GM12878 (cell line): ENCODE measurements at regions of chr7 and their contacts with region 1.

Region 1: DNA sequence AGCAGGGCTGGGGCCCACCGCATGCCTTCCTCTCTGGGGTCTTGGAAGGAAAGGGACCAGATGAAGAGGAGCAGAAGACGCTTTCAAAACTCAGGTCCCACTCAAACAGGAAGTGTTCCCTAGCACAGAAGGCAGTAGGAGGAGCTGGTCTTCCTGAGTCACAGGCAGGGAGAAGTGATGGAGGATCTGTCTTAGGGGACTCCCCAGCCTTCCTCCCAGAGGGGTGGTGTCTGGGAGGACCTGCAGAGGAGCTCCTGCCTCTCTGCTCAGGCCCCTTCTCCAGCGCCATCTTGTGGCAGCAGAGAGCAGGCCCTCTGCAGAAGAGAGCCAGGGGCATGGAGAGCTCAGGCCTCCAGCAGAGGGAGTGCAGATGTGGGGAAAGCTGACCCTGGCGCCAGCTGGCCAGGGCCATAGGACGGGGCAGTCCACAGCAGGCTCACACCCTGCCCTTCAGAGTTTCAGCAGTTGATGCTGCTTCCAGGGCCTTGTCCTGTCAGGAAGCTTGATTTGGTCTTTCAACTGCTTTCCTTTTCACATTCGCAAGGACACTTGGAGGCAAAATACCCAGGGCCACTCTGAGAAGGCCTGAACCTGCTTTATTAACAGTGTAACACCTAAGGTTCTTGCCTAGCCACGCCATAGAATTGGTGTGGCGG is 62.2 kb upstream of the TARP start:
- DNase-seq: peak; percentile 82
- ATAC-seq: peak; percentile 97
- H3K4me3 ChIP-seq: peak overlapping the region; percentile 45; the same call in 1 of the 2 replicates
- H3K27ac ChIP-seq: no peak overlapping the region
- H3K4me1 ChIP-seq: no peaks in the 10 kb centered on the region; the same call in 1 of the 2 replicates
- H3K27me3 ChIP-seq: no peaks in the 10 kb centered on the region
- CTCF ChIP-seq: peak; percentile 99 to 100 (median 100)
- EP300 ChIP-seq: no peak
- POLR2A ChIP-seq: no peak
- RAD21 ChIP-seq: peak; percentile 84

Region 2: GRCh38 chr7:37916673-37917660 is 418.7 kb before region 1 on chr7 and contains the start of gene SFRP4:
- CTCF ChIA-PET with region 1: interaction called, 29 read pairs
- POLR2A ChIA-PET with region 1: no interaction called
- RAD21 ChIA-PET with region 1: interaction called, 11 read pairs
- SMC1A ChIA-PET with region 1: interaction called, 4 read pairs
- in situ Hi-C with region 1: loop called (anchors 5 kb)
- intact Hi-C with region 1: no loop called
- DNase-seq: no peak
- ATAC-seq: peak; percentile 44
- H3K4me3 ChIP-seq: peak within 1 kb of the TSS; percentile 48
- H3K27ac ChIP-seq: no peak within 1 kb of the TSS
- H3K4me1 ChIP-seq: peaks cover 13% of the 10 kb centered on the region
- H3K27me3 ChIP-seq: peaks cover 0 to 4% of the 10 kb centered on the region in 2 experiments; a peak in 2 of 4 replicates
- CTCF ChIP-seq: peak; percentile 72 to 74 (median 73)
- EP300 ChIP-seq: no peak
- POLR2A ChIP-seq: no peak
- RAD21 ChIP-seq: peak; percentile 67
- polyA plus RNA-seq, gene SFRP4: 0.02 TPM in 1 of 2 experiments, not detected in the other

Region 3: DNA sequence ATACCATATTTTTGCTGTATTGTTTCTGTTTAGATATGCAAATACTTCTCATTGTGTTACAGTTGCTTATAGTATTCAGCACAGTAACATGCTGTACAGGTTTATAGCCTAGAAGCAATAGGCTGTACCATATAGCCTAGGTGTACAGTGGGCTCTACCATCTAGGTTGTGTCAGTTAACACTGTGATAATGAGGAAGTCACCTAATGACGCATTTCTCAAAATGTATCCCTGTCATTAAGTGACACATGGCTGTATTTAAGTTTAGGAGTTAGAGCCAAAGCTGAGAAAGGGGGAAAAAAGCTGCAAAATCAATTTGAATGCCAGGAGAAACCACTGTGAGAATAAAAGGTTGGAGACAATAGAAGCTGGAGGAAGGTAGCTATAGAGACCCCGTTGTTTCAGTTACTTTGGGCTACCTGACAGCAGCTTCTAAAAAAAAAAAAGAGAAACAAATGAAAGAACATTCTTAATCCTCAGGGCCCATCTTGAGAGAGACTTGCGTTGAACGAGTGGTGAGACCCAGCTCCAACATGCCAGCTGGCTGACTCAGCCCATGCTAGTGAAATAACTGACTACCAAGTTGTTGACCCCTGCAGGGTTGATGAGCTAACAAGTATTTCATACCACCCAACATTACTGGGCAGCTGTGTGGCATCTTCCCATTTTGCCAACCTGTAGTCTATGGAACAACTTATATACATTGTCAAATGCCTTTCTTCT is 148.9 kb before region 1 on chr7:
- CTCF ChIA-PET with region 1: interaction called, 21 read pairs
- POLR2A ChIA-PET with region 1: no interaction called
- RAD21 ChIA-PET with region 1: no interaction called
- SMC1A ChIA-PET with region 1: interaction called, 5 read pairs
- in situ Hi-C with region 1: no loop called
- intact Hi-C with region 1: no loop called
- DNase-seq: no peak
- ATAC-seq: peak; percentile 55
- H3K4me3 ChIP-seq: no peak overlapping the region
- H3K27ac ChIP-seq: no peak overlapping the region
- H3K4me1 ChIP-seq: peaks cover 39% of the 10 kb centered on the region
- H3K27me3 ChIP-seq: no peaks in the 10 kb centered on the region
- CTCF ChIP-seq: no peak
- EP300 ChIP-seq: no peak
- POLR2A ChIP-seq: no peak
- RAD21 ChIP-seq: no peak

Region 4: DNA sequence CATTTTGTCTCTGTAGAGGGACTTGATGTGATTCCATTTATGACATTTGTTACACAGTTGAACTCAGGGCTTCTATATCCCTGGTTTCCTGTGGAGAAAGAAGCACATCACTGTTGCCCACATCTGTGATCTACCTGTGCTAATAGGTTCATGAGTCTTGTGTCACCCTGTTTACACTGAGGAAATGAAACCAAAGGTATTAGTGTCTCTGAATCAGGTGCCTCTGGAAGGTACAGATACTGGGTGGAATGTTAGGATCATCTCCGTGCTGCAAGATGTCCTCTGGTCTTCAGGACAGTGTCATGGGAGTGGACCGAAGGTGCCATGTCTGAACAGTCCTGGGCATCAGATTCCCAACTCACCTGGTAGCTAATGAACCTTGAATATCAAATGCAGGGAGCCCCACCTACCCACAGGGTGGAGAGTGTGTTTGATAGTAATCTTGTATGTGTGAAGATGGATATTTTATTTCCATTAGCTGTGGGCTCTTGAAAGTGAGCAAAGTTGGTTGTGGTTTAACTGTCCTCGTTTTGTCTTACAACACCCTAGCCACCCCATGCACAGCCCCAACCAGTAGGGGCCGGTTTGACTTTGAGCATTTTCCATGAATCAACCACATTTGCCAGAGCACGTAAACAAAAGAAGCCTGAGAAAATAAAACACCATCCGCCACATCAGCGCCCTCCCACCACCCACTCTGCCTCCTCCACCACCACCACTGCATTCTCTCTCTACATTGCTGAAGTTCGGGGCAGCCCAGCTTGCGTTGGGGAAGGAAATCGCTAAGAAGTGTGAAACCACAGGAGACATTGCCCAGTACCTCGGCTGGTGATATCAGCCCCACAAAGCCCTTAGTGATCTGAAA is 102.9 kb before region 1 on chr7:
- CTCF ChIA-PET with region 1: interaction called, 42 read pairs
- POLR2A ChIA-PET with region 1: no interaction called
- RAD21 ChIA-PET with region 1: interaction called, 19 read pairs
- SMC1A ChIA-PET with region 1: interaction called, 28 read pairs
- in situ Hi-C with region 1: no loop called
- intact Hi-C with region 1: no loop called
- DNase-seq: peak; percentile 82
- ATAC-seq: peak; percentile 96
- H3K4me3 ChIP-seq: no peak overlapping the region
- H3K27ac ChIP-seq: 0 out of 2 replicates have a peak overlapping the region, but pooled peaks have one; percentile 34
- H3K4me1 ChIP-seq: peaks cover 14% of the 10 kb centered on the region
- H3K27me3 ChIP-seq: no peaks in the 10 kb centered on the region
- CTCF ChIP-seq: peak in 1 of 3 experiments; percentile 17; a peak in 1 of 6 replicates
- EP300 ChIP-seq: peak in 1 of 2 experiments; percentile 82
- POLR2A ChIP-seq: no peak
- RAD21 ChIP-seq: no peak

Region 5: GRCh38 chr7:38311329-38311937 is 24.2 kb before region 1 on chr7:
- CTCF ChIA-PET with region 1: interaction called, 42 read pairs
- POLR2A ChIA-PET with region 1: interaction called, 5 read pairs
- RAD21 ChIA-PET with region 1: interaction called, 19 read pairs
- SMC1A ChIA-PET with region 1: interaction called, 12 read pairs
- in situ Hi-C with region 1: no loop called
- intact Hi-C with region 1: no loop called
- DNase-seq: no peak
- ATAC-seq: peak; percentile 95
- H3K4me3 ChIP-seq: peak overlapping the region; percentile 71
- H3K27ac ChIP-seq: peak overlapping the region; percentile 35; the same call in 1 of the 2 replicates
- H3K4me1 ChIP-seq: peaks cover 20% of the 10 kb centered on the region
- H3K27me3 ChIP-seq: no peaks in the 10 kb centered on the region
- CTCF ChIP-seq: no peak
- EP300 ChIP-seq: no peak
- POLR2A ChIP-seq: peak; percentile 89
- RAD21 ChIP-seq: no peak

Region 6: DNA sequence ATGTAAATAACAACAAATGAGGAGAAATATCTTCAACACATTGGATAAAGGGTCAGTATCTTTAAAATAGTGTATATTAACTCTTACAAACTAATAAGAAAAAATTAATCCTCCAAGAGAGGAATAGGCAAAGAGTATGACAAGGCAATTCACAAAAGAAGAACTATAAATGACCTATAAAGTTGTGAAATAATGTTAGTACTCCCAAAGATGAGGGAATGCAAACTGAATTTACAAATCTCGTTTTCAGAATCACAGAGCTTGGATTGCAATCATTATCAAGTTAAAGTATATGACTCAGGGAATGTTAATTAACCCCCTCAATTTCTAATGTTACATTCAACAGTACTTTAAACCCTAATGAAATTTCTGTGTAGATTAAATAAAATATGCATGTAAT is 25.2 kb after region 1 on chr7:
- CTCF ChIA-PET with region 1: interaction called, 247 read pairs
- POLR2A ChIA-PET with region 1: no interaction called
- RAD21 ChIA-PET with region 1: interaction called, 17 read pairs
- SMC1A ChIA-PET with region 1: interaction called, 9 read pairs
- in situ Hi-C with region 1: no loop called
- intact Hi-C with region 1: no loop called
- DNase-seq: no peak
- ATAC-seq: no peak
- H3K4me3 ChIP-seq: no peak overlapping the region
- H3K27ac ChIP-seq: no peak overlapping the region
- H3K4me1 ChIP-seq: peaks cover 7% of the 10 kb centered on the region
- H3K27me3 ChIP-seq: no peaks in the 10 kb centered on the region
- CTCF ChIP-seq: no peak
- EP300 ChIP-seq: no peak
- POLR2A ChIP-seq: no peak
- RAD21 ChIP-seq: no peak